Ovary (tissue), 10 donors: ENCODE measurements at regions of chr2 and their contacts with region 1.

Region 1: DNA sequence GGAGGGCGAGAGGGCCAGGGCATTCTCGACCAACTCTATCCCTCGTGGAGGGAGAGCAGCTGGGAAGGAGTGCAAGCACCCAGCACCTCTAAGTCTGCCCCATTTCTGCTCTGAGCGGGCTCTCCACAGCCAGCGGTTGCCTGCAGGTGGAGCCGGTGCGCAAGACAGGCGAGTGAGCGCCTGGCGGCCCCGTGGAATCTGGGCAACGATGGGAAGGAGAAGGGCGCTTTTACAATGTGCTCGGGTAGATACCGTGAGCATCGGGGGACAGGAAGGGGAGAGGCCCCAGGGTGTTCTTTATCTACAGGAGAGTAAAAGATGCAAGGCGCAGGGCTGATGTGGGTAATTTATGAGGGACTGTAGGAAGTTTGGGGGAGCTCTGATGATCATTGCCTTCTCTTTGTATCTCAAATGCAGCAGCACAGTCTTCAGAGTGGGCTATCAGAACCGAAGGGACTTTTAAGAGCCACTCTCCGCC is 867 bp upstream of the TTL start:
- DNase-seq: peak; percentile 68 to 83 (median 76)
- H3K4me3 ChIP-seq: peak overlapping the region; percentile 85
- H3K27ac ChIP-seq: peak overlapping the region in 1 of 2 donors; percentile 82
- H3K4me1 ChIP-seq: peaks cover 6% of the 10 kb centered on the region
- H3K27me3 ChIP-seq: no peaks in the 10 kb centered on the region
- CTCF ChIP-seq: peak; percentile 39 to 61 (median 54)
- EP300 ChIP-seq: no peak
- POLR2A ChIP-seq: no peak

Region 2: GRCh38 chr2:112542123-112542983 is 61.3 kb after region 1 on chr2 and contains the start of gene POLR1B:
- intact Hi-C with region 1: loop called in 2 of 4 experiments (anchors 5 to 10 kb)
- DNase-seq: peak; percentile 78 to 87 (median 82)
- H3K4me3 ChIP-seq: peak within 1 kb of the TSS; percentile 70
- H3K27ac ChIP-seq: peak within 1 kb of the TSS; percentile 86 to 89
- H3K4me1 ChIP-seq: peaks cover 10% of the 10 kb centered on the region
- H3K27me3 ChIP-seq: no peaks in the 10 kb centered on the region
- CTCF ChIP-seq: peak in 1 of 3 donors; percentile 4
- EP300 ChIP-seq: no peak
- POLR2A ChIP-seq: peak; percentile 33
- total RNA-seq, gene POLR1B: 7.9 to 29.9 (median 18.9) TPM

Region 3: DNA sequence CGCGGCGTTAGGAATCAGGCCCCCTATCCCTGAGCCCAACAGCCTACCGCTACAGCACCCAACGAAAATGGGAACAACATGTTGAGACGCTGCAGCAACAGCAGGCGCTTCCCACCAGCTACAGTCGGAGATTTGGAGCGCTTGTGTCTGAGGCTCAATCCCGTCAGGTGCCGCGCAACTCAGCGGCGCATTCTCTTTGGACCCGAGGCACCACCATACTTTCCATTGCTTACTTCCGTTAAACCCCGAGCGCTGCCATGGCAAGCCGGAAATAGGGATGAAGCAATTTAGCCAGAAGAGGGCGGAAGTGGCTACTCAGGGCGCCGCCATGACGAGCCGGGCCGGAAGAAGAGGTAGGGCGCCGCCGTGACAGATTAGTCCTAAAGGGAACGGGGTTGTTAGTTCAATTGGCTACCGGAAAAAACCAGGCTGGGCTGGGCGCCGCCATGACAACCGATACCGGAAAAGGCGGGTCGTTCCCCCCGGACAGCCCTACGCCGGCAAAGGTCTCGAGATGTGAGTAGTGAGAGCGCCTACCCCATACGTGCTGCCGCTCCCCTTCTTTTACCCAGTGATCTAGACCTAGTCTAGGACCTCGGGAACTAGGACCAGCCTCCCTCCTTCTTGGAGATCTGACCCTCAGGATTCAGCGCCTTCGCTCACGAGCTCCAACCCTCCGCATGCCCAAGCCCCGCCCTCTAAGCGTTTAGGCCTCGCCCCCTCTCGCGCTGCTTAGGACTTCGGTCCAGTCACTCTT is 103.2 kb after region 1 on chr2 and contains the start of gene CHCHD5:
- intact Hi-C with region 1: loop called in 3 of 4 experiments (anchors 5 kb)
- DNase-seq: peak; percentile 93 to 96 (median 94)
- H3K4me3 ChIP-seq: peak within 1 kb of the TSS; percentile 52
- H3K27ac ChIP-seq: peak within 1 kb of the TSS; percentile 31 to 85
- H3K4me1 ChIP-seq: peaks cover 7% of the 10 kb centered on the region
- H3K27me3 ChIP-seq: no peaks in the 10 kb centered on the region
- CTCF ChIP-seq: peak; percentile 37 to 51 (median 47)
- EP300 ChIP-seq: peak; percentile 38
- POLR2A ChIP-seq: peak; percentile 38
- total RNA-seq, gene CHCHD5: 14.2 to 28.6 (median 22.2) TPM

Region 4: DNA sequence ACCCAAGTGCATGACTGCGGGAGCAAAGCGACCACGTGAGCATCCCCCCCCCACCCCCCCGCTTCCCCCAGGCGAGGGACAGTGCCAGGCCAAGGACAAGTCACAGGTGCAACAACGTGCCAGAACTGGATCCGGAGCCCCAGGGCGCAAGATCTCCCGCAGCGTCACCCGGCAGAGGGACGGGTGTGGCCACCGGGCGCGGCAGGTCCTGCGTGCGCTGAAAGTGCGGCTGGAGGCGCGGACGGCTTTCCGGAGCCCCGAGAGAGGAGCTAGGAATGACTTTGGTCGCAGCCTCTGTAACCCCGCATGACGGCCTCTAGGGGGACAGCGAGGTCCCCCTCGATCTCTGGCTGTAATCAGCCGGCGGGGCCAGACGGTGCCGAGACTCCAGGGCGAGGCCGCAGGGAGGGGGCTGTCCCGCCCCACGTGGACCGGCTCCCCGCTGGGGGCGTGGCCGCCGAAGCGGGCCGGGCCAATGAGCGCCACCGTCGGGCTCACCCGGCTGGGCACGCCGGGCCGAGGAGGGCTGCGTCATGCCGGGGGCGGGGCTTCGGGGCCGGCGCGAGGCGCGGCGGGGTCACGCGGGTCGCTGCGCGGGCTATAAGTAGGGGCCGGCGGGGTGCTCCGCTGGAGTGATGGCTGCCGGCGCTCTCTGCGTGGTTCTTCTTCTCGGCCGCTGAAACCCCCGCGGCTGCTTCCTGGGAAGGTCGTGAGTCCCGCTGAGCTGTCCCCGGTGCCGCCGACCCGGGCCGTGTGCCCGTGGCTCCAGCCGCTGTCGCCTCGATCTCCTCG is 164.4 kb after region 1 on chr2 and contains the start of gene SLC20A1:
- intact Hi-C with region 1: loop called in 1 of 4 experiments (anchors 5 kb)
- DNase-seq: peak; percentile 88 to 96 (median 94)
- H3K4me3 ChIP-seq: peak within 1 kb of the TSS; percentile 72
- H3K27ac ChIP-seq: peak within 1 kb of the TSS; percentile 86 to 89
- H3K4me1 ChIP-seq: peaks cover 4% of the 10 kb centered on the region
- H3K27me3 ChIP-seq: no peaks in the 10 kb centered on the region
- CTCF ChIP-seq: peak in 2 of 3 donors; percentile 25 to 33
- EP300 ChIP-seq: no peak
- POLR2A ChIP-seq: peak; percentile 89
- total RNA-seq, gene SLC20A1: 13.1 to 49.9 (median 19.9) TPM